Gastrocnemius medialis (tissue), 4 donors: ENCODE measurements at regions of chr18 and their contacts with region 1.

Region 1: GRCh38 chr18:2376707-2377106 is 194.6 kb downstream of the METTL4 start:
- DNase-seq: no peak
- ATAC-seq: no peak
- H3K4me3 ChIP-seq: no peak overlapping the region
- H3K27ac ChIP-seq: no peak overlapping the region
- H3K4me1 ChIP-seq: no peaks in the 10 kb centered on the region
- H3K27me3 ChIP-seq: no peaks in the 10 kb centered on the region
- CTCF ChIP-seq: no peak
- POLR2A ChIP-seq: no peak

Region 2: GRCh38 chr18:2360861-2361260 is 15.8 kb before region 1 on chr18:
- in situ Hi-C with region 1: no loop called
- intact Hi-C with region 1: no loop called
- DNase-seq: no peak
- ATAC-seq: no peak
- H3K4me3 ChIP-seq: no peak overlapping the region
- H3K27ac ChIP-seq: no peak overlapping the region
- H3K4me1 ChIP-seq: no peaks in the 10 kb centered on the region
- H3K27me3 ChIP-seq: no peaks in the 10 kb centered on the region
- CTCF ChIP-seq: no peak
- POLR2A ChIP-seq: no peak

Region 3: GRCh38 chr18:2395427-2396161 is 18.9 kb after region 1 on chr18:
- in situ Hi-C with region 1: no loop called
- intact Hi-C with region 1: loop called (anchors 1 kb)
- DNase-seq: no peak
- ATAC-seq: no peak
- H3K4me3 ChIP-seq: no peak overlapping the region
- H3K27ac ChIP-seq: no peak overlapping the region
- H3K4me1 ChIP-seq: no peaks in the 10 kb centered on the region
- H3K27me3 ChIP-seq: no peaks in the 10 kb centered on the region
- CTCF ChIP-seq: no peak
- POLR2A ChIP-seq: no peak

Region 4: GRCh38 chr18:2417861-2418610 is 41.3 kb after region 1 on chr18:
- in situ Hi-C with region 1: no loop called
- intact Hi-C with region 1: no loop called
- DNase-seq: no peak
- ATAC-seq: no peak
- H3K4me3 ChIP-seq: no peak overlapping the region
- H3K27ac ChIP-seq: no peak overlapping the region
- H3K4me1 ChIP-seq: no peaks in the 10 kb centered on the region
- H3K27me3 ChIP-seq: no peaks in the 10 kb centered on the region
- CTCF ChIP-seq: no peak
- POLR2A ChIP-seq: no peak